ENCODE measurements at regions of chr3 and their contacts with region 1.

Region 1: GRCh38 chr3:133927540-133928066 is 31.9 kb upstream of the RAB6B start:
- DNase-seq: peak; percentile 51
- H3K4me3 Mint-ChIP-seq: no peak overlapping the region
- H3K27ac Mint-ChIP-seq: no peak overlapping the region
- H3K4me1 Mint-ChIP-seq: no peaks in the 10 kb centered on the region
- H3K27me3 Mint-ChIP-seq: peaks cover 95% of the 10 kb centered on the region
- CTCF ChIP-seq: peak; percentile 94

Region 2: DNA sequence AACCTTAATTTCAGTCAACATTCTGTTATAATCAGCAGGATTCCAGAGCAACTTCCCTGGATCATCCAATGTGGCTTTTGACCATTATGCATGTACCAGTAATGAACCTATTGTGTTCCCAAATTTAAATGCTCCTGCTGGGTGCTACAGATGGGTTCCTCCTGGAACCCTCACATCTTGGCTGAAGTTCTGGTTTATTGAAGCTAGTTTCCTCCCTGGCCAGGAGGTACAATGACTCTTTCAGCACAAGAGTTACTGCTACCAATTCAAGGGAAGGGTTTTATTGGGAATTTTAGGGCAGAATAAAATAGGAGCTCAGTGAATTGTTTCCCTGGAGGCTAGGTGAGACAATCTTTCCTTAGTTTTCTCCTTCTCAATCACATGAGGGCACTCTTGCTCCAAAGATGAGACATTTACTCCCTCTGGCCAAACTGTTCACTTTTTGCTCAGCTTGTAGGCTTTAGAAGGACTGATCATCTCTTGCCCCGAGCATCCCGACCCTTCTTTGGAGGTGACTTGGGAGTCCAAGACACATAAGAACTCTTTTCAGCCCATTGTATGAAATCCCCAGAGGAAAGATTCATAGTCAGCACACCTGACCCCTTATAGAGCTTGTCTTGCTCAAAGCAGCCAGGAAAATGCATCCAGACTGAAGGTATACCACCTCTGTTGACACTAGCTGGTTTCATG is 1196.6 kb before region 1 on chr3:
- CTCF ChIA-PET with region 1: no interaction called
- intact Hi-C with region 1: loop called (anchors 5 kb)
- DNase-seq: peak; percentile 48
- H3K4me3 Mint-ChIP-seq: no peak overlapping the region
- H3K27ac Mint-ChIP-seq: no peak overlapping the region
- H3K4me1 Mint-ChIP-seq: no peaks in the 10 kb centered on the region
- H3K27me3 Mint-ChIP-seq: peaks cover 65% of the 10 kb centered on the region
- CTCF ChIP-seq: peak; percentile 52

Region 3: GRCh38 chr3:133821767-133822638 is 105.6 kb before region 1 on chr3:
- CTCF ChIA-PET with region 1: no interaction called
- intact Hi-C with region 1: loop called (anchors 1 kb)
- DNase-seq: peak; percentile 73
- H3K4me3 Mint-ChIP-seq: no peak overlapping the region
- H3K27ac Mint-ChIP-seq: peak overlapping the region; percentile 8
- H3K4me1 Mint-ChIP-seq: peaks cover 8% of the 10 kb centered on the region
- H3K27me3 Mint-ChIP-seq: no peaks in the 10 kb centered on the region
- CTCF ChIP-seq: peak; percentile 70

Region 4: GRCh38 chr3:133859381-133860234 is 68.0 kb before region 1 on chr3:
- CTCF ChIA-PET with region 1: no interaction called
- intact Hi-C with region 1: no loop called
- DNase-seq: no peak
- H3K4me3 Mint-ChIP-seq: no peak overlapping the region
- H3K27ac Mint-ChIP-seq: no peak overlapping the region
- H3K4me1 Mint-ChIP-seq: no peaks in the 10 kb centered on the region
- H3K27me3 Mint-ChIP-seq: peaks cover 90% of the 10 kb centered on the region
- CTCF ChIP-seq: no peak

Region 5: GRCh38 chr3:134039161-134039862 is 111.7 kb after region 1 on chr3:
- CTCF ChIA-PET with region 1: no interaction called
- intact Hi-C with region 1: loop called (anchors 1 kb)
- DNase-seq: peak; percentile 51
- H3K4me3 Mint-ChIP-seq: no peak overlapping the region
- H3K27ac Mint-ChIP-seq: no peak overlapping the region
- H3K4me1 Mint-ChIP-seq: no peaks in the 10 kb centered on the region
- H3K27me3 Mint-ChIP-seq: peaks cover 7% of the 10 kb centered on the region
- CTCF ChIP-seq: peak; percentile 71

Region 6: GRCh38 chr3:134179508-134179907 is 251.9 kb after region 1 on chr3:
- CTCF ChIA-PET with region 1: interaction called, 3 read pairs
- intact Hi-C with region 1: loop called (anchors 5 kb)
- DNase-seq: no peak
- H3K4me3 Mint-ChIP-seq: no peak overlapping the region
- H3K27ac Mint-ChIP-seq: no peak overlapping the region
- H3K4me1 Mint-ChIP-seq: no peaks in the 10 kb centered on the region
- H3K27me3 Mint-ChIP-seq: no peaks in the 10 kb centered on the region
- CTCF ChIP-seq: no peak

Region 7: GRCh38 chr3:134212906-134213665 is 285.5 kb after region 1 on chr3:
- CTCF ChIA-PET with region 1: interaction called, 20 read pairs
- intact Hi-C with region 1: loop called (anchors 1 kb)
- DNase-seq: peak; percentile 97
- H3K4me3 Mint-ChIP-seq: no peak overlapping the region
- H3K27ac Mint-ChIP-seq: no peak overlapping the region
- H3K4me1 Mint-ChIP-seq: peaks cover 8% of the 10 kb centered on the region
- H3K27me3 Mint-ChIP-seq: no peaks in the 10 kb centered on the region
- CTCF ChIP-seq: peak; percentile 100